Heart right ventricle (tissue), 16 donors: ENCODE measurements at regions of chr19 and their contacts with region 1.

Region 1: GRCh38 chr19:33883859-33884519 is 87.3 kb downstream of the KCTD15 start:
- DNase-seq: peak; percentile 21 to 62
- ATAC-seq: peak; percentile 69 to 93 (median 78)
- H3K4me3 ChIP-seq: peak overlapping the region in 5 of 10 donors; percentile 11 to 25 (median 17)
- H3K27ac ChIP-seq: peak overlapping the region in 9 of 10 donors; percentile 58 to 86 (median 81)
- H3K4me1 ChIP-seq: peaks cover 5 to 40% (median 31%) of the 10 kb centered on the region in 9 donors
- H3K27me3 ChIP-seq: peaks cover 0 to 13% (median 0%) of the 10 kb centered on the region in 7 donors
- CTCF ChIP-seq: no peak

Region 2: DNA sequence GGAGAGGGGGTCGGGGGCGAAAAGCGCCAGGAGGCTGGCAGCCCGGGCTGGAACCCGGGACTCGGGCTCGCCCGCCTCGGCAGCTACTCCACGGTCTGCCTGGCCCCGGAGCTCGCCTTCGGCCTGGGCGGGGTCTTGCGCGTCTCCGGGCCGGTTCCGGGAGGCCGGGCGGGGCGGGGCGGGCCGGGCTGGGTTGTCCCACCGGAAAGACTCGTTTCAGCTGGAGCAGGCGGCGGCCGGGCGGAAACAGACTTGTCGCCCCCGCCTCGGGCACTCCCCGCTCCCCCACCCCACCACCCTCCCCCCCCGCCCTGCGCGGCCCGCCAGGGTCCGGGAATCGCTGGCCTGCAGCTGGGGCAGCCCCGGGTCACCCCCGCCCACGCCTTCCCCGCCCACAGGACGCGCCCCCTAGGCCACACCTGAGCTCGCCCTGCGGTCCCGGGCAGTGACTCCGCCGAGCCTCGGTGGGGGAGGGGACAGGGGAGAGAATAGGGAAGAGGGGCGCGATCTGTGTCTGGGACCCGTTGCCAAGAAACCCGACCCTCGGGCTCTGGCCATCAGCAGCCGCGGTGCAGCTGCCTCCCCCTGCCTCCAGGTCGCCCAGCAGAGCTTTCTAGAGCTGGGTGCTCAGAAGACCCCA is 22.1 kb after region 1 on chr19:
- intact Hi-C with region 1: loop called in 1 of 10 experiments (anchors 1 kb)
- DNase-seq: peak; percentile 80
- ATAC-seq: peak; percentile 89 to 94 (median 92)
- H3K4me3 ChIP-seq: peak overlapping the region; percentile 43 to 70 (median 53)
- H3K27ac ChIP-seq: peak overlapping the region; percentile 72 to 98 (median 90)
- H3K4me1 ChIP-seq: peaks cover 4 to 36% (median 26%) of the 10 kb centered on the region in 9 donors
- H3K27me3 ChIP-seq: peaks cover 0 to 61% (median 25%) of the 10 kb centered on the region in 7 donors
- CTCF ChIP-seq: no peak